GM10248 (cell line): ENCODE measurements at regions of chr1 and their contacts with region 1.

Region 1: DNA sequence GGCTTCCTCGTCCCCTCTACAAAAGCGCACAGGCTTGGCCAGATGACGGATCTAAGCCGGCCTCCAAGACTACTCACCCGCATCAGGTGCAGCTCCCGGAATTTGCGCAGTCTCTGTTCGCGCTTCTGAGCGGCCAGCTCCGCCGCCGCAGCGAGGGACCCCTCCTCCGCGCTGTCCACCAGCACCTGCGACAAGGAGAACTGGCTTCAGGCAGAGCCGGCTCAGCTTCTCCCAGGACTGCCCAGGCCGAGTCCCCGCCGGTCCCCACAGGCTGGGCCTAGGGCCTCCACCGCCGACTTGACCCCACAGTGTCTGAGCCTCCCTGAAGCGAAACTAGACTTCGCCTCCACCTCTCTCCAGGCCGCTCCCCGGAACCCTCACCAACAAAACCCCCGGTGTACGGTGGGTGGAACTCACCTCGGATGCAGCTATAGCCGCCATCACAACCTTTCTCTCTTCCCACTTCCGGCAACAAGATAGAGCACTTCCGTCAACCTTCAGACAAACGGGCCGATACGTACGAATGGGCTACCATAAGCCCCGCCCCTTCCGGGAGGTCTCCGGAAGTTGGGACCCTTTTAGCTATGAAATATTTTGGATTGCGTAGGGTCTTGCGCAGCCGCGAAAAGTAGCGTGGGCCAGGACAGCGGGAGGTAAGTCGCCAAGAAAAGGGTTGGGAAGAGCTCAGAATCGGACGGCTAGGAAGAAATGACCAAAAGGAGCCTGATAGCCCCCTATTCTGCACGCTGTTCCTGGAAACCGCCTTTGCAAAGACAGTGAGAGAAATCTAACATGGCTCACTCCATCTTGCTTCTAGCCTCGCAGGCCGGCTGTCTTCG is at the start of gene SYF2:
- DNase-seq: peak; percentile 96
- CTCF ChIP-seq: no peak

Region 2: GRCh38 chr1:25247024-25247828 is 15.0 kb after region 1 on chr1 and contains the start of gene RSRP1:
- CTCF ChIA-PET with region 1: interaction called, 8 read pairs
- POLR2A ChIA-PET with region 1: interaction called, 26 read pairs
- DNase-seq: peak; percentile 100
- CTCF ChIP-seq: no peak